CD4-positive, alpha-beta memory T cell (primary cell): ENCODE measurements at regions of chr5 and their contacts with region 1.

Region 1: DNA sequence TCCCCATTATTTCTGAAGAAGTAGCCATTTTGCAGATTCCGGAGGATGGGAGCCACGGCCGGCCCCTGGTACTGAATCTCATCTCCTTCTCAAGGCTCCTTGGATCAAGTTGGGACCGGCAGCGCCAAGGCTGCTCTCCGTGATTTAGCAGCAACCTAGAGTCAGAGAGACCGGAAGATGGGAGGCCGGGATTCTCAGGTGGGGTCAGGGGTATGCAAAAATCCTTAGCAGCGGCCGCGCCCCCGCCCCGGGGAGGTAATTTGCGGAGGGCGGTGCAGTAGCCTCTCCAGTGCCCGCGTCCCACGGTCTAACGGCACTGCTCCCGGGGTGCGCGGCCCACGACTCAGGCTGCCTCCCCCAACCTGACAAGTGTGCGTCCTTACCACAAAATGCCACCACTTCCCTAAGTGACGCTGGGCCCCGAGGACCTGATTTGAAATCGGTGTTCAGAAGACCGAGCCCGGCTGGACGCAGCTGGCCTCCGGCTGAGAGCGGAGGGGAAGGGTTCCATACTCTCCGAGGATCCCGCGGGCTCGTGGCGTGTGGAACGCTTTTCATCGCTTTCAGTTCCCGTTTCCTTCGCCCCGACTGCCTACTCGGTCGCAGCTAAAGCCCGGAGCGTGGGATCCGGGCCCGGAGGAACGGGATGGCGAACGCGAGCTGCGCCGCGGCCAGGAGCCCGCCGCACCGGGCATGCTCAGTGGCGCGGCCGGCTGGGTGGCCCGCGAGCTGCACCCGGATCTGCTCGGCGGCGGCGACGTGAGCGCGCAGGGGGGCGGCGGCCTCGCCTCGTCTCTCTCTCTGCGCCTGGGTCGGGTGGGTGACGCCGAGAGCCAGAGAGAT is at the start of gene SCAMP1:
- DNase-seq: peak; percentile 87 to 97 (median 94)
- H3K4me3 ChIP-seq: peak within 1 kb of the TSS; percentile 91 to 97
- H3K4me3 Mint-ChIP-seq: peak within 1 kb of the TSS; percentile 92 to 98 (median 95)
- H3K27ac ChIP-seq: peak within 1 kb of the TSS; percentile 91
- H3K27ac Mint-ChIP-seq: peak within 1 kb of the TSS; percentile 85 to 98 (median 96)
- H3K4me1 ChIP-seq: peaks cover 44% of the 10 kb centered on the region
- H3K4me1 Mint-ChIP-seq: peaks cover 30 to 78% (median 47%) of the 10 kb centered on the region in 4 donors
- H3K27me3 ChIP-seq: no peaks in the 10 kb centered on the region
- H3K27me3 Mint-ChIP-seq: no peaks in the 10 kb centered on the region
- total RNA-seq, gene SCAMP1: 28.9 to 29.7 TPM

Region 2: GRCh38 chr5:77030097-77031071 is 1329.7 kb before region 1 on chr5 and contains the start of gene AGGF1:
- CTCF ChIA-PET with region 1: interaction called, 3 read pairs
- POLR2A ChIA-PET with region 1: interaction called, 5 read pairs
- intact Hi-C with region 1: loop called (anchors 2 kb)
- DNase-seq: peak; percentile 88 to 94 (median 90)
- H3K4me3 ChIP-seq: peak within 1 kb of the TSS; percentile 43 to 93
- H3K4me3 Mint-ChIP-seq: peak within 1 kb of the TSS; percentile 81 to 97 (median 94)
- H3K27ac ChIP-seq: peak within 1 kb of the TSS; percentile 82
- H3K27ac Mint-ChIP-seq: peak within 1 kb of the TSS; percentile 78 to 97 (median 92)
- H3K4me1 ChIP-seq: peaks cover 34% of the 10 kb centered on the region
- H3K4me1 Mint-ChIP-seq: peaks cover 25 to 49% (median 35%) of the 10 kb centered on the region in 4 donors
- H3K27me3 ChIP-seq: no peaks in the 10 kb centered on the region
- H3K27me3 Mint-ChIP-seq: peaks cover 0 to 1% of the 10 kb centered on the region in 2 donors
- total RNA-seq, gene AGGF1: 29.4 to 29.6 TPM

Region 3: GRCh38 chr5:77491783-77492652 is 868.0 kb before region 1 on chr5 and contains the start of gene WDR41:
- CTCF ChIA-PET with region 1: no interaction called
- POLR2A ChIA-PET with region 1: interaction called, 8 read pairs
- intact Hi-C with region 1: loop called (anchors 5 kb)
- DNase-seq: peak; percentile 79 to 87 (median 84)
- H3K4me3 ChIP-seq: peak within 1 kb of the TSS; percentile 57 to 91
- H3K4me3 Mint-ChIP-seq: peak within 1 kb of the TSS; percentile 85 to 95 (median 91)
- H3K27ac ChIP-seq: peak within 1 kb of the TSS; percentile 64
- H3K27ac Mint-ChIP-seq: peak within 1 kb of the TSS; percentile 65 to 94 (median 91)
- H3K4me1 ChIP-seq: peaks cover 7% of the 10 kb centered on the region
- H3K4me1 Mint-ChIP-seq: peaks cover 9 to 14% (median 10%) of the 10 kb centered on the region in 4 donors
- H3K27me3 ChIP-seq: no peaks in the 10 kb centered on the region
- H3K27me3 Mint-ChIP-seq: peaks cover 10 to 12% of the 10 kb centered on the region in 2 donors
- total RNA-seq, gene WDR41: 11.0 to 14.0 TPM

Region 4: GRCh38 chr5:77733130-77733529 is 626.9 kb before region 1 on chr5:
- CTCF ChIA-PET with region 1: no interaction called
- POLR2A ChIA-PET with region 1: no interaction called
- intact Hi-C with region 1: no loop called
- DNase-seq: no peak
- H3K4me3 ChIP-seq: no peak overlapping the region
- H3K4me3 Mint-ChIP-seq: no peak overlapping the region
- H3K27ac ChIP-seq: no peak overlapping the region
- H3K27ac Mint-ChIP-seq: peak overlapping the region in 1 of 7 donors; percentile 58
- H3K4me1 ChIP-seq: no peaks in the 10 kb centered on the region
- H3K4me1 Mint-ChIP-seq: peaks cover 30 to 42% (median 37%) of the 10 kb centered on the region in 4 donors
- H3K27me3 ChIP-seq: no peaks in the 10 kb centered on the region
- H3K27me3 Mint-ChIP-seq: no peaks in the 10 kb centered on the region

Region 5: DNA sequence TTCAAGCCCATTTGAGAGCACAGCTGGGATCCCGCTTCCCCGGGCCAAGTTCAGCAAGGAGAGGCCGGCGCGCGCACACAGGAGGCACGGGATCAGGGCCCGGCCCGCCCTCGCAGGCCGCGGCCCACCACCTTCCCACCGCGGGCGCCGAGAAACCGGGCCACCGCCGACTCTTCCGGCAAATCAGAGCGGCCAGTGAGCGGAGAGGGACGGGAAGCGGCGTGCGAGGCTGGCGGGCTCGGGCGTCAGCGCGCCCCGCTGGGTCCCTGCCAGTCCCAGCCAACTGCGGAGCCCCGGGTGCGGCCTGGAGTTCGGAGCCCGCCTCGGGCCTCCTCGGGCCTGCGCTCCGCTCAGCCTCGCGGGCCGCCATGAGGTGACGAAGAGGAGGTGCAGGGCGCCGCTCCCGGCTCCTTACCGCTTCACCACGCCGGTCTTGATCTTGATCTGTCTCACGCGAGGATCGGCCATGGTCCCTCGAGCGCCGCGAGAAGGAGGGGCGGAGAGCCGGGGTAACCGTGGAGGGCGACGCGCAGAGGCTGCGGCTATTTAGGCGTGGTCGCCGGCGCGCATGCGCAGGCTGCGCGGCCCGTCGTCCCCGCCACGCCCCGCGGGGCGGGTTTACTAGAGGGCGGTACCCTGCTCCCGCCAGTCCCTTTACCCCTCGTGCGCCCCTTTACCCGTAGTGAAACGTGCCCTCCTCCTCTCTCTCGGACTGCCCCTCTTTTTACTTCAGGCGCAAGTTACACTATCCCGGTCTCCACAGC is 584.1 kb before region 1 on chr5 and contains the start of gene TBCA:
- CTCF ChIA-PET with region 1: no interaction called
- POLR2A ChIA-PET with region 1: no interaction called
- intact Hi-C with region 1: loop called (anchors 1 kb)
- DNase-seq: peak; percentile 91 to 94 (median 93)
- H3K4me3 ChIP-seq: peak within 1 kb of the TSS; percentile 61 to 85
- H3K4me3 Mint-ChIP-seq: peak within 1 kb of the TSS; percentile 90 to 98 (median 96)
- H3K27ac ChIP-seq: peak within 1 kb of the TSS; percentile 97
- H3K27ac Mint-ChIP-seq: peak within 1 kb of the TSS; percentile 88 to 99 (median 98)
- H3K4me1 ChIP-seq: peaks cover 46% of the 10 kb centered on the region
- H3K4me1 Mint-ChIP-seq: peaks cover 33 to 50% (median 45%) of the 10 kb centered on the region in 4 donors
- H3K27me3 ChIP-seq: no peaks in the 10 kb centered on the region
- H3K27me3 Mint-ChIP-seq: no peaks in the 10 kb centered on the region
- total RNA-seq, gene TBCA: 80.4 to 97.2 TPM

Region 6: GRCh38 chr5:78300464-78301045 is 59.5 kb before region 1 on chr5:
- CTCF ChIA-PET with region 1: interaction called, 99 read pairs
- POLR2A ChIA-PET with region 1: interaction called, 274 read pairs
- intact Hi-C with region 1: no loop called
- DNase-seq: peak in 4 of 5 donors; percentile 14 to 24 (median 18)
- H3K4me3 ChIP-seq: no peak overlapping the region
- H3K4me3 Mint-ChIP-seq: no peak overlapping the region
- H3K27ac ChIP-seq: no peak overlapping the region
- H3K27ac Mint-ChIP-seq: no peak overlapping the region
- H3K4me1 ChIP-seq: no peaks in the 10 kb centered on the region
- H3K4me1 Mint-ChIP-seq: peaks cover 3 to 5% (median 4%) of the 10 kb centered on the region in 4 donors
- H3K27me3 ChIP-seq: peaks cover 3% of the 10 kb centered on the region
- H3K27me3 Mint-ChIP-seq: peaks cover 3% of the 10 kb centered on the region in 2 donors

Region 7: GRCh38 chr5:79514391-79515105 is 1154.5 kb after region 1 on chr5:
- CTCF ChIA-PET with region 1: no interaction called
- POLR2A ChIA-PET with region 1: interaction called, 3 read pairs
- intact Hi-C with region 1: loop called (anchors 5 kb)
- DNase-seq: peak; percentile 90 to 93 (median 92)
- H3K4me3 ChIP-seq: peak overlapping the region; percentile 71 to 84
- H3K4me3 Mint-ChIP-seq: peak overlapping the region; percentile 96 to 99 (median 96)
- H3K27ac ChIP-seq: peak overlapping the region; percentile 82
- H3K27ac Mint-ChIP-seq: peak overlapping the region; percentile 94 to 100 (median 99)
- H3K4me1 ChIP-seq: peaks cover 18% of the 10 kb centered on the region
- H3K4me1 Mint-ChIP-seq: peaks cover 13 to 25% (median 16%) of the 10 kb centered on the region in 4 donors
- H3K27me3 ChIP-seq: peaks cover 9% of the 10 kb centered on the region
- H3K27me3 Mint-ChIP-seq: peaks cover 15 to 18% of the 10 kb centered on the region in 2 donors